CD8-positive, alpha-beta T cell (primary cell): ENCODE measurements at regions of chr6 and their contacts with region 1.

Region 1: GRCh38 chr6:11155589-11155988 is 44.1 kb upstream of the ERVFRD-1 start:
- DNase-seq: no peak
- ATAC-seq: no peak
- H3K4me3 ChIP-seq: no peak overlapping the region
- H3K4me3 Mint-ChIP-seq: no peak overlapping the region
- H3K27ac ChIP-seq: no peak overlapping the region
- H3K27ac Mint-ChIP-seq: no peak overlapping the region
- H3K4me1 ChIP-seq: no peaks in the 10 kb centered on the region
- H3K4me1 Mint-ChIP-seq: peaks cover 7% of the 10 kb centered on the region
- H3K27me3 ChIP-seq: no peaks in the 10 kb centered on the region
- H3K27me3 Mint-ChIP-seq: peaks cover 3% of the 10 kb centered on the region
- CTCF ChIP-seq: no peak

Region 2: GRCh38 chr6:11050731-11051130 is 104.9 kb before region 1 on chr6:
- CTCF ChIA-PET with region 1: no interaction called
- POLR2A ChIA-PET with region 1: no interaction called
- intact Hi-C with region 1: no loop called
- DNase-seq: no peak
- ATAC-seq: no peak
- H3K4me3 ChIP-seq: no peak overlapping the region
- H3K4me3 Mint-ChIP-seq: no peak overlapping the region
- H3K27ac ChIP-seq: no peak overlapping the region
- H3K27ac Mint-ChIP-seq: no peak overlapping the region
- H3K4me1 ChIP-seq: no peaks in the 10 kb centered on the region
- H3K4me1 Mint-ChIP-seq: no peaks in the 10 kb centered on the region
- H3K27me3 ChIP-seq: peaks cover 4 to 6% of the 10 kb centered on the region in 2 experiments
- H3K27me3 Mint-ChIP-seq: peaks cover 54% of the 10 kb centered on the region
- CTCF ChIP-seq: no peak

Region 3: DNA sequence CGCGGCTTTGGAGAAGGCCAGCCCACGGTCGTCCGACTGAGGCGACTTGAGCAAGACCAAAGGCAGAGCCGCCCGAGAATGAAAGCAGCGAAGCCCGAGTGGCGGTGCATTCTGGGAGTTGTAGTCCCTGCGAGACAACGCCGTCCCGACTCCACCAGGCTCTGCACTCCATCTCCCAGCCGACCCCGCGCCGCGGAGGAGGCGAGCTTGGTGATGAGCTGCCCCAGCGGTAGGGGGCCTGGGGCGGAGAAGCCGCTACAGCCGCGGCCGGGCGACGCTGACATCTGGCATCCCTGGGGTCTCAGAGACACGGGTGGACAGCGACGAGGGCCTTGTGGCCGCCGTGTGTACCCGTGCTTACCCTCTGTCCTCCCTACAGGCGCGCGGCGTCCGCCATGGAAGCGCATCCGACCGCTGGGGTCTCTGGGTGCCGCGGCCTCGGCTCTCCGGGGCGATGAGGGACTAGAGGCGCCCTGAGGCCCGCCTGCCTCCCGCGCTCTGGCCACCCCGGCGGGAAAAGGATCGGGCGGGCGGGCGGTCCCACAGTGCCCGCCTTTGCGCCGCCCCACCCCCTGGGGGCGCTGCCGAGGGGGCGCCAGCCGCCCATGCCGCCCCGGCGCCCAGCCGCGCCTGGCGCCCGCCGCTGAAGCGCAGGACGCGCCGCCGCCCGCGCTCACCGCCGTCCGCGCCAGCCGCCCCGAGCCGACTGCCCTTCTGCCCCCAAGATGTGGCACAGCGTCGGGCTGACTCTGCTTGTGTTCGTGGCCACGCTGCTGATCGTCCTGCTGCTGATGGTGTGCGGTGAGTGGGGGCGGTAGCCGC is 61.8 kb before region 1 on chr6 and contains the start of gene SMIM13:
- CTCF ChIA-PET with region 1: no interaction called
- POLR2A ChIA-PET with region 1: no interaction called
- intact Hi-C with region 1: no loop called
- DNase-seq: peak; percentile 87 to 96 (median 95)
- ATAC-seq: peak; percentile 92
- H3K4me3 ChIP-seq: peak within 1 kb of the TSS; percentile 85 to 90
- H3K4me3 Mint-ChIP-seq: peak within 1 kb of the TSS; percentile 97
- H3K27ac ChIP-seq: peak within 1 kb of the TSS; percentile 81 to 92
- H3K27ac Mint-ChIP-seq: peak within 1 kb of the TSS; percentile 97
- H3K4me1 ChIP-seq: peaks cover 13% of the 10 kb centered on the region
- H3K4me1 Mint-ChIP-seq: peaks cover 30% of the 10 kb centered on the region
- H3K27me3 ChIP-seq: no peaks in the 10 kb centered on the region
- H3K27me3 Mint-ChIP-seq: no peaks in the 10 kb centered on the region
- CTCF ChIP-seq: peak; percentile 75
- total RNA-seq, gene SMIM13: 4.7 to 5.4 TPM

Region 4: DNA sequence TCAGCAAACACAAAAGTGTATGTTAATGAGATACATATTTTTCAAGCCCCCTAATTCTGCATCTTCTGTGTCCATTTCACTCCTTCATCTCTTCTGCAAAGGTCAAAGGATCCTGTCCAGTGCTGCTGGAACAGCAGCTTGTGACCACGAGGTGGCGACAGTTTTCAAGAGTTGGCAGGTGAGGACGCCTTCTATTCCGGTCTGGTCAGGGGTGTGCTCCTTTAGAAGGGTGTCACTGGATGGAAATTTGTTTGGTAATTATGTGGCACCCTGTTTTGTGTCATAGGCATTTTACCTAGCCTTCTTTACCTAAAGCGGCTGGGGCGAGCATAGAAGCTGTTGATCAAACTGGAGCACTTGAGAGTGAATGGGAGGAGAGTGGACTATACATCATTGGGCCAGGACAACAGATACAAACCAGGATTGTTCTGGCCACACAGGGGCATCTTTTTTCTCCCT is 11.2 kb before region 1 on chr6:
- CTCF ChIA-PET with region 1: interaction called, 22 read pairs
- POLR2A ChIA-PET with region 1: no interaction called
- intact Hi-C with region 1: no loop called
- DNase-seq: peak; percentile 42 to 82 (median 74)
- ATAC-seq: peak; percentile 77
- H3K4me3 ChIP-seq: no peak overlapping the region
- H3K4me3 Mint-ChIP-seq: no peak overlapping the region
- H3K27ac ChIP-seq: no peak overlapping the region
- H3K27ac Mint-ChIP-seq: no peak overlapping the region
- H3K4me1 ChIP-seq: no peaks in the 10 kb centered on the region
- H3K4me1 Mint-ChIP-seq: no peaks in the 10 kb centered on the region
- H3K27me3 ChIP-seq: no peaks in the 10 kb centered on the region
- H3K27me3 Mint-ChIP-seq: no peaks in the 10 kb centered on the region
- CTCF ChIP-seq: peak; percentile 92